ENCODE measurements at regions of chr17 and their contacts with region 1.

Region 1: DNA sequence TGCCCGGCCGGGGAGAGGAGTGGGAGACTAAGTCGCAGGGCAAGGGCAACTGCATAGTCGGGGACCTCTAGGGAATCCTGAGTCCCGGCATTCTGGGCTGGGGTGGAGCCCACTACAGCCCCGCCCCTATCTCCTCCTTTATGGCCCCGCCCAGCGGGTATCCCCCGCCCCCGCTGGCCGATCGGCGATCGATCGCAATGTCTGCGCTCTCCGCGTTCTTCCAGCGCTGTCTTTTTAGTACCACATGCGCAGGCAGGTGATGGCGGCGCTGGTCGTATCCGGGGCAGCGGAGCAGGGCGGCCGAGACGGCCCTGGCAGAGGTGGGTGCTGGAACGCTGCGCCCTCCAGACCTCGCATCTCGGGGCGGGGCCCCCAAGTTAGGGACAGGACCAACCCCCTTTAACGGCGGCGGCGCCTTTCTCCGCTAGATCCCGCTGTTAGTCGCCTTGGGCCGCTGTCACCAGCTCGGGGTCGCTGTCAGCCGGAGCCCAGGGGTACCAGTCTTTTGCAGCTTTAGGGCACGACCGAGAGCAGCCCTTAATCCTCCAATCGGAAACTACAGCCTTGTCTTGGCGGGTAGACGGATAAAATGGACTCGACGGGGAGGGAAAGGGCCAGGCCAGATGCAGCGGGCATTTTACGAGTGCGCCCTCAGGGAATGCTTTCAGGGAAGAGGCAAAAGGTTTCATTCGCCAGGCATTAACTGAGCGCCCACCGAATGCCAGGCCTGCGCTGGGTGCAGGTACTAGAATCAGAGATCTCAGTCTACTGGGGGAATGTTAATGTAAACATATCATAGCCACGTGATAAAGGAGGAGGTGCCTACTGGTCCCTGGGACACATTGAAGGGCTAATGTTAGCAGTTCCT is at the start of gene DPH1:
- DNase-seq: peak; percentile 80
- H3K4me3 Mint-ChIP-seq: peak within 1 kb of the TSS; percentile 81
- H3K27ac Mint-ChIP-seq: no peak within 1 kb of the TSS
- H3K4me1 Mint-ChIP-seq: no peaks in the 10 kb centered on the region
- H3K27me3 Mint-ChIP-seq: peaks cover 33% of the 10 kb centered on the region
- CTCF ChIP-seq: no peak
- total RNA-seq, gene DPH1: 24.7 and 29.7 TPM in 2 replicates

Region 2: DNA sequence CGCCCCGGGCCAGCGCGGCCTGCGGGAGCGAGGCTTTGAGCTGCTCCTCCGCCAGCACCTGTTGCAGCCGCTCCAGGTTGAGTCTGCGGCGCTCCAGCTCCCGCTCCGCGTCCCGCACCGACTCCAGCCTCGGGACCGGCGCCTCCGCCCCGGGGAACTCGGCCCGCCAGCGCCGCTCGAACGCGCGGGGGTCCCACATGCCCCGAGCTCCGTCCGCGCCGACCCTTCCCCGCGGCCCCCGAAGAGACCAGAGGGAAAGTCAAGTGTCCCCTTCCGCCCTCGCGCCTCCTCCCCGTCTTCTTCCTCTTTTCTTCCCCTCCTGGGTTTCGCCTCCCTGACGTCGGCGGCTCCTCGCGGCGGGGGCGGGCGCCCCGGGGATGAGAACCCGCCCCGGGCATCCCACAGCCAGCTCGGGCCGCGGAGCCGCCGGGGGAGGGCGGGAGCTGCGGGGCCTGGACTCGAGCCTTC is 800.7 kb before region 1 on chr17:
- CTCF ChIA-PET with region 1: no interaction called
- intact Hi-C with region 1: no loop called
- DNase-seq: peak; percentile 43
- H3K4me3 Mint-ChIP-seq: peak overlapping the region; percentile 83
- H3K27ac Mint-ChIP-seq: no peak overlapping the region
- H3K4me1 Mint-ChIP-seq: peaks cover 24% of the 10 kb centered on the region
- H3K27me3 Mint-ChIP-seq: peaks cover 64% of the 10 kb centered on the region
- CTCF ChIP-seq: no peak

Region 3: GRCh38 chr17:1908699-1909309 is 121.3 kb before region 1 on chr17:
- CTCF ChIA-PET with region 1: interaction called, 69 read pairs
- intact Hi-C with region 1: loop called (anchors 1 kb)
- DNase-seq: peak; percentile 64
- H3K4me3 Mint-ChIP-seq: no peak overlapping the region
- H3K27ac Mint-ChIP-seq: no peak overlapping the region
- H3K4me1 Mint-ChIP-seq: no peaks in the 10 kb centered on the region
- H3K27me3 Mint-ChIP-seq: peaks cover 43% of the 10 kb centered on the region
- CTCF ChIP-seq: peak; percentile 48

Region 4: GRCh38 chr17:2041561-2042366 is 11.6 kb after region 1 on chr17 and contains the start of gene OVCA2:
- CTCF ChIA-PET with region 1: no interaction called
- intact Hi-C with region 1: loop called (anchors 1 kb)
- DNase-seq: peak; percentile 93
- H3K4me3 Mint-ChIP-seq: peak within 1 kb of the TSS; percentile 83
- H3K27ac Mint-ChIP-seq: peak within 1 kb of the TSS; percentile 96
- H3K4me1 Mint-ChIP-seq: peaks cover 10% of the 10 kb centered on the region
- H3K27me3 Mint-ChIP-seq: no peaks in the 10 kb centered on the region
- CTCF ChIP-seq: no peak
- total RNA-seq, gene OVCA2: 21.0 and 22.1 TPM in 2 replicates

Region 5: DNA sequence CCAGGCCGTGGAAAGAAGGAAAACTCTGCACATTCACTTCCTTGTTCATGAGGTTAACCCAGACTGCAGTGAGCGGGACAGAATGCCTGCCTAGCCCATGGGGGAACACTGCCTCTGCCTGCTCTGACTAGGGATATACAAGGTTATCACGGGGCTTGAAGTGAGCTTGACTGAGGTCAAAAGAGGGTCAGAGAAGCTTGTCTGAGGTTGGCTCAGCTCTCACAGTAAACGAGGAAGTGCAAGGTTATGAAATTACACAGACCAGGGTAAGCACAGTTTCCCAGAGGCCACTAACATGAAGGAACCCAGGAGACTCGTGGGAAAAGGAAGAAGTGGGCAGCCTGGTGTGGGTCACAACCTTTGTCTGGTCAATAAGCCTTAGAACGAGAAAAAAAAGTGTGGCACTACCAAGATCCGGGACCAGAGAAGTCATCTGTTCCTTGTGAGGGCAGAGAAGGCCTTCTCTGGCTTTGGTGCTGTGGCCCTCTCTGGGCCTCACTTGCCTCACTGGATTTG is 53.5 kb after region 1 on chr17:
- CTCF ChIA-PET with region 1: no interaction called
- intact Hi-C with region 1: no loop called
- DNase-seq: peak; percentile 5
- H3K4me3 Mint-ChIP-seq: no peak overlapping the region
- H3K27ac Mint-ChIP-seq: peak overlapping the region; percentile 69
- H3K4me1 Mint-ChIP-seq: peaks cover 32% of the 10 kb centered on the region
- H3K27me3 Mint-ChIP-seq: no peaks in the 10 kb centered on the region
- CTCF ChIP-seq: no peak

Region 6: GRCh38 chr17:2459917-2460271 is 429.7 kb after region 1 on chr17:
- CTCF ChIA-PET with region 1: no interaction called
- intact Hi-C with region 1: no loop called
- DNase-seq: no peak
- H3K4me3 Mint-ChIP-seq: no peak overlapping the region
- H3K27ac Mint-ChIP-seq: no peak overlapping the region
- H3K4me1 Mint-ChIP-seq: no peaks in the 10 kb centered on the region
- H3K27me3 Mint-ChIP-seq: no peaks in the 10 kb centered on the region
- CTCF ChIP-seq: no peak

Measured in Calu3 (cell line).